ENCODE measurements at regions of chr3 and their contacts with region 1.

Region 1: DNA sequence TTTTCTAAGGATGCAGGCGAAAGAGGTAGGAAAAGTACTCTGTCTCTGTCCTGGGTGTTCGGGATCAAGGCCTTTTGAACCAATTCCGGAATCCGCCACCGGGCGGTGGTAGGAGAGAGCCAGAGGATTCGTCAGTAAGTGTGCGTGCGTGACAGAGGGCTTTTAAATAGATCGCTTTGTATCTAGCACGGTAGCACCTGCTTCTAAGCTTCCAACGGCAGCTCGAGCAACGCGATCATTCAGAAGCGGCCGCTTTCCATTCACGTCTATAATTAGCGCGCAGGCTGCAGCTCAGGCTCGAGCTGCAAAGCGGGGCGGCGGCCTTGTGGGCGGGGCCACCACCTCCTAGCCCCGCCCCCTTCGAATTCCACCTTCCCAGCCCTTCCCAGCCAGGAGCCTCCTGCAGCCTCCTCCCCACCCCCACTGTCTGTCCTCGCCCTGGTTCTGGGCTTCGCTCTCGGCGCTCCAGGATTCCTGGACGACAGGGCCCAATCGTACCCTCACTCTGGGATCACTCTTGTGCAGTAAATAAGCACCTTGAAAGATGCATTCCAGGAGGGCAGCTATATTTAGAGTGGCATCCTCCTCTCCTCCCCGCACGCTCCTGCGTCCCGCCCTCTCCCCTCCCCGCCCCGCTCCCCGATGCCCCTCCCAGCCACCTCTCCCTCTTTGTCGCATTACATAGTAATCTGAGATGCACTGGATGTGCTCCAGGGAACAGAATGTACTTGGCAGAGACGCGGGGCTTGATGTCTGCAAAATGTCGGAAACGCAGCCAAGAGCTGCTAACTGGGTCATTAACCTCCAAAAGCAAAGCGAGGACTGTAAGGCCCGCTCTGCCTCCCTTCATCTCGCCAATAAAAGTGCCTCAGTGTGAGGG is 224.1 kb upstream of the TPRG1 start:
- DNase-seq: peak; percentile 97 to 99
- ATAC-seq: peak; percentile 78 to 84
- H3K4me3 ChIP-seq: peak overlapping the region; percentile 47 to 58 (median 54)
- H3K27ac ChIP-seq: peak overlapping the region; percentile 92 to 98 (median 98)
- H3K4me1 ChIP-seq: peaks cover 44% of the 10 kb centered on the region in 2 donors
- H3K27me3 ChIP-seq: no peaks in the 10 kb centered on the region
- CTCF ChIP-seq: peak; percentile 48 to 75 (median 60)
- POLR2A ChIP-seq: peak; percentile 67 to 77

Region 2: DNA sequence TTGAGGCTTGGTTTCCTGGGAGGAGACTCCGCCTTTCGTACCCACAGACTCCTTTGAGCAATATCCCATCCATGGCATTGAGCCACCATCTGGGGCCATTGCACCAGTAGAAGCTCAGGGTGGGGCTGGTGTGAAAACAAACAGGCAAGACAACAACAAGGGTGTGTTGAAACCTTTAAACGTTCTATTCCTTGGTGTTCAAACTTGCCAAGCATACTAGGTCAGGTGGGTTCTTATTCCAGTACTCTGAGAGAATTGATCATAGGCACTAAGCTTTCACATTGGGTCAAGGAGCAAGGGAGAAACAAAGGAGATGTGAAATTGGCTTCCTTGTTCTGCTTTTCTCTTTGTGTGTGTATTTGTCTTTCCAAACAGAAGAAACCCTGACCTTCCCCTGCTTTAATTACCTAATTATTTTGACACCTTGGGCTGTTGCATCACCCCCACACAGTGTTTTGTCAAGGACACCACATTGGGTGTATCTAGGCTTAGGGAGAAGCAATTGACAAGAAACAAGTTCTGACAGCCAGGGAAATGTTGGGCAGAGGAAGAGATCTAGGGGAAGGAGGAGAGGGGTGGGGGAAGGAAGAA is 1097.2 kb before region 1 on chr3:
- in situ Hi-C with region 1: no loop called
- intact Hi-C with region 1: loop called (anchors 10 kb)
- DNase-seq: peak in 1 of 2 donors; percentile 76
- ATAC-seq: peak; percentile 18 to 72
- H3K4me3 ChIP-seq: no peak overlapping the region
- H3K27ac ChIP-seq: no peak overlapping the region
- H3K4me1 ChIP-seq: peaks cover 0 to 6% of the 10 kb centered on the region in 2 donors
- H3K27me3 ChIP-seq: no peaks in the 10 kb centered on the region
- CTCF ChIP-seq: no peak
- POLR2A ChIP-seq: no peak

Region 3: DNA sequence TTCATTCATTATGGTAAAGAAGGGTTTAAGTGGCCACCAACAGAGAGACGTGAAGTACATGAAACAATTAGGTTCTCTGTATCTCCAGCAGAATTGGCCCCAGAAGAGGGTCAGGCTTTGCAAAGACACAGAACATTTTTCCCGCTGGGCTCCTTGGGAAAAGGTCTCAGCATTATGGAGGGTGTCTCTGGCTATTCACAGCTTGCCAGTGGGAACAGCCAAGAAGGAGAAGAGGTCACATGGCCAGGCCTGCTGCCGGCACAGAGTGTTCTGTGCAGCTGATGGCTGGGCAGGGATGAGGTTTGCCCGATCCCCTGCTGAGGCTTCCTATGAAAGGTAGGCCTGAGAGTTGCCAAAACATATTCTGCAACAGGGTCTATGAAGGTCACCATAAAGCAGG is 871.5 kb before region 1 on chr3:
- in situ Hi-C with region 1: no loop called
- intact Hi-C with region 1: loop called (anchors 2 kb)
- DNase-seq: peak; percentile 44 to 83
- ATAC-seq: peak; percentile 58 to 74
- H3K4me3 ChIP-seq: no peak overlapping the region
- H3K27ac ChIP-seq: peak overlapping the region; percentile 73 to 86 (median 82)
- H3K4me1 ChIP-seq: peaks cover 13 to 27% of the 10 kb centered on the region in 2 donors
- H3K27me3 ChIP-seq: no peaks in the 10 kb centered on the region
- CTCF ChIP-seq: no peak
- POLR2A ChIP-seq: no peak

Region 4: DNA sequence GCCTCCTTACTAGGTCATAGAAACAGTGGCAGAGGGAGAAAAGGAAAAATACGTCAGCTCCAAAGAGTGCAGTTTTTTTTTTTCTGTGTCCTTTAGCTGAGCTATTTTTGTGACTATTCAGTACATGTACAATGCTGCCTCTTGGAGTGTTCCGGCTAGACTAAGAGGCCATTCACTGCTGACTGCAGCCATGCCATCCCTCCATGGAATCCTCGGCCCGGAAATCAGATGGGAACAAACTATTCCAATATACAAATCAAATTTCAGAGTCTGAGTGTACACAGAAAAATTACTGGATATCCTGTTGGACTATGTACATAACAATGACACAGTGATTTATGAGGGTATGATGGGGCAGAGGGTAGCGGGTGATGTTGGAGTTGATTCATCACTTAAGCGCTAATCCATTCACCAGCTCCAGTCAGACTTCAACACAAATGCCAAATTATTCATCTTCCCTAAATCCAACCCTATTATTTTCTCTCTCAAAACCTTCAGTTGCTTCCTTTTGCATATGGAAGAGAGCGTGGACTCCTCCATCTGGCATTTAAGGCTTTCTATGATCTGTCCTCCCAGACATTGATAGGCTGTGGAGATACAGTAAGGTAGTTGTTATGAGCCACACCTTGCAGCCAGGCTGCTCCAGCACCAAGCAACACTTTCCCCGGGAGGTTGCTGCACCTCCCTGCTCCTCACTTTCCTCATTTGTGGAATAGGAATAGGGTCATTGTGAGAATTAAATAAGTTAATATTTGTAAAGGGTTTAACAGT is 684.5 kb before region 1 on chr3:
- in situ Hi-C with region 1: loop called in 1 of 4 experiments (anchors 5 kb)
- intact Hi-C with region 1: loop called (anchors 2 kb)
- DNase-seq: peak; percentile 49 to 54
- ATAC-seq: peak; percentile 8 to 17
- H3K4me3 ChIP-seq: no peak overlapping the region
- H3K27ac ChIP-seq: peak overlapping the region; percentile 94 to 99 (median 96)
- H3K4me1 ChIP-seq: peaks cover 83 to 92% of the 10 kb centered on the region in 2 donors
- H3K27me3 ChIP-seq: no peaks in the 10 kb centered on the region
- CTCF ChIP-seq: no peak
- POLR2A ChIP-seq: peak in 1 of 2 donors; percentile 68

Region 5: DNA sequence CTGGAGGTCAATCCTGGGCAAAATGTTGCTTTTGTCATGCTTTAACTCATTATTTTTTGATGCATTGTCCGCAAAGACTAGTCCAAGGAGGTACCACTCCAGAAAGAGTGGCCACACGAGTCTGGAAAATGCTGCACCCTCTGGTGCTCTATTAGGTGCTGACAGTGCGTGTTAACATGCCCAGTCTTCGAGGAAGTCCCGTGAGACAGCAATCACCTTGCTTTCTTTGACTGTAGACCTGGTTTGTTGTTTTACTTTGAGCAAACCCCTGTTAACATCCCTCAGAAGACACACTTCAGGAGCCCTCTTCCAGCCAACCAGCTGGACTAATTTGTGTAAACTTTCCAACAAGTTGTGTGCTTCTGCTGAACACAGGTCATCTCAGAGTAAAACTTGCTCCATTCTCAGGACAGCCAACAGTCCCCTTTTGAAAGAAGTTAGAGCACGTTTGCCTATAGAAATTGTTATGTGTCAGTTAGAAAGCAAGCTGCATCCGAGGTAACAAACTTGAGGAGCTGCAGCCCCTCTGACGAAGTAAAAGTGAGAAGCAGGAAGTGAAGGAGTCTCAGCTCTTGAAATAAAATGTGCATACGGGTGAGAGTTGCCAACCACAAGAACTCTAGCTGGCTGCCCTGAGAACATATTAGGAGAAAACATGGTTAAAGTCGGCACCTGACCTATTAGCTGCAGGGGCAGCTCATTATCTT is 588.7 kb before region 1 on chr3:
- in situ Hi-C with region 1: loop called in 1 of 4 experiments (anchors 10 kb)
- intact Hi-C with region 1: loop called (anchors 5 kb)
- DNase-seq: no peak
- ATAC-seq: no peak
- H3K4me3 ChIP-seq: no peak overlapping the region
- H3K27ac ChIP-seq: no peak overlapping the region
- H3K4me1 ChIP-seq: peaks cover 20 to 21% of the 10 kb centered on the region in 2 donors
- H3K27me3 ChIP-seq: no peaks in the 10 kb centered on the region
- CTCF ChIP-seq: no peak
- POLR2A ChIP-seq: no peak

Region 6: GRCh38 chr3:188853856-188854771 is 93.5 kb before region 1 on chr3:
- in situ Hi-C with region 1: no loop called
- intact Hi-C with region 1: loop called (anchors 1 kb)
- DNase-seq: peak; percentile 35 to 72
- ATAC-seq: peak; percentile 93 to 96
- H3K4me3 ChIP-seq: no peak overlapping the region
- H3K27ac ChIP-seq: peak overlapping the region; percentile 71 to 83 (median 80)
- H3K4me1 ChIP-seq: peaks cover 11 to 37% of the 10 kb centered on the region in 2 donors
- H3K27me3 ChIP-seq: no peaks in the 10 kb centered on the region
- CTCF ChIP-seq: peak in 1 of 5 experiments; percentile 22
- POLR2A ChIP-seq: no peak

Region 7: DNA sequence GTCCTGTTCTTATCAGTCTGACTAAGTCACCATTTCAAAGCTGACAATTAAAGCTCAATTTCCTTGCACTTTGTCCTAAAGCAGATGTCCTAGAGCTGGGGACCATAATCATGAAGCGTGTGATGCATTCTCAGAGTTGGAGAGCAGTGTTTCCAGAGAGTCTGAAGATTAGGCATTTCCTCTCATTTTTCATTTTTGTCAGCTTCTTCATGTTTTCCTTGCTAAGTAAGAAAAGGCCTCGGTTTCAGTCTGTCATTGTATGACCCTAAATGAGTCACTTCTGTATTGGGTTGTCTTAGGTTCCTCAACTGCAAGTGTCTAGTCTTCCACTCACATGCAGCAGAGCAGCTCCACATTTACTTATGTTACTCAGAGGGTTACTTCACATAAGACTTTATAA is 33.1 kb before region 1 on chr3:
- in situ Hi-C with region 1: no loop called
- intact Hi-C with region 1: no loop called
- DNase-seq: no peak
- ATAC-seq: peak; percentile 26 to 75
- H3K4me3 ChIP-seq: no peak overlapping the region
- H3K27ac ChIP-seq: no peak overlapping the region
- H3K4me1 ChIP-seq: no peaks in the 10 kb centered on the region
- H3K27me3 ChIP-seq: no peaks in the 10 kb centered on the region
- CTCF ChIP-seq: no peak
- POLR2A ChIP-seq: no peak

Region 8: GRCh38 chr3:189070965-189071364 is 123.3 kb after region 1 on chr3:
- in situ Hi-C with region 1: no loop called
- intact Hi-C with region 1: no loop called
- DNase-seq: no peak
- ATAC-seq: no peak
- H3K4me3 ChIP-seq: no peak overlapping the region
- H3K27ac ChIP-seq: no peak overlapping the region
- H3K4me1 ChIP-seq: no peaks in the 10 kb centered on the region
- H3K27me3 ChIP-seq: no peaks in the 10 kb centered on the region
- CTCF ChIP-seq: no peak
- POLR2A ChIP-seq: no peak

Measured in gastrocnemius medialis (tissue), 4 donors.